Sigmoid colon (tissue), 7 donors: ENCODE measurements at regions of chr2 and their contacts with region 1.

Region 1: GRCh38 chr2:208040199-208041171 is 15.2 kb upstream of the PLEKHM3 start:
- DNase-seq: peak; percentile 83
- H3K4me3 ChIP-seq: peak overlapping the region in 3 of 4 donors; percentile 1 to 18 (median 7)
- H3K27ac ChIP-seq: peak overlapping the region in 3 of 4 donors; percentile 67 to 77 (median 77)
- H3K4me1 ChIP-seq: peaks cover 0 to 14% (median 0%) of the 10 kb centered on the region in 4 donors
- H3K27me3 ChIP-seq: no peaks in the 10 kb centered on the region
- CTCF ChIP-seq: peak; percentile 56 to 75 (median 68)
- EP300 ChIP-seq: no peak
- POLR2A ChIP-seq: no peak

Region 2: GRCh38 chr2:207395535-207396251 is 644.8 kb before region 1 on chr2:
- intact Hi-C with region 1: no loop called
- DNase-seq: no peak
- H3K4me3 ChIP-seq: no peak overlapping the region
- H3K27ac ChIP-seq: no peak overlapping the region
- H3K4me1 ChIP-seq: no peaks in the 10 kb centered on the region
- H3K27me3 ChIP-seq: no peaks in the 10 kb centered on the region
- CTCF ChIP-seq: no peak
- EP300 ChIP-seq: no peak
- POLR2A ChIP-seq: no peak

Region 3: DNA sequence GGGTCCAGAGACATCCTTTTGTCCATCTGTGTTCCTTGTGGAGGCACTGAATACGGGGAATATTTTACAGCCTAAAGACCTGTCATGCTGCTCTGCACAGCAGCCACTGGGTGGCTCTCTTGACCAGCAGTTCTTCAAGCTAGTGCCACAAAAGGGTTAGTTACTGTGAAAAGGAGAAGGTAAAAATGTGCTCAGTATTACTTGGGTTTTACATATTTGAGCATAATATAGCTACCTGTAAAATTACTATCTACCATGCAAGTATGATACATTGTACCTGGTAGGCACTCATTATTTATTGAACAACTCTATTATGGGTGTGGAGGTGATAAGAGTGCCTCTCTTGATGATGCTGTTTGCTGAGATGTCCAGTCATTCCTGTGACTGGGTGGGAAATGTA is 294.4 kb before region 1 on chr2:
- intact Hi-C with region 1: loop called (anchors 1 kb)
- DNase-seq: no peak
- H3K4me3 ChIP-seq: no peak overlapping the region
- H3K27ac ChIP-seq: no peak overlapping the region
- H3K4me1 ChIP-seq: peaks cover 0 to 4% (median 0%) of the 10 kb centered on the region in 4 donors
- H3K27me3 ChIP-seq: no peaks in the 10 kb centered on the region
- CTCF ChIP-seq: peak; percentile 69 to 87 (median 80)
- EP300 ChIP-seq: no peak
- POLR2A ChIP-seq: no peak

Region 4: GRCh38 chr2:207769597-207770486 is 270.6 kb before region 1 on chr2 and contains the start of gene FZD5:
- intact Hi-C with region 1: loop called (anchors 1 kb)
- DNase-seq: peak; percentile 97
- H3K4me3 ChIP-seq: peak within 1 kb of the TSS; percentile 75 to 98 (median 86)
- H3K27ac ChIP-seq: peak within 1 kb of the TSS; percentile 81 to 97 (median 92)
- H3K4me1 ChIP-seq: peaks cover 0 to 45% (median 40%) of the 10 kb centered on the region in 4 donors
- H3K27me3 ChIP-seq: no peaks in the 10 kb centered on the region
- CTCF ChIP-seq: peak in 3 of 4 experiments; percentile 22 to 71 (median 28)
- EP300 ChIP-seq: peak in 1 of 4 donors; percentile 35
- POLR2A ChIP-seq: peak in 1 of 2 donors; percentile 70
- total RNA-seq, gene FZD5: 29.3 to 52.0 (median 37.4) TPM

Region 5: DNA sequence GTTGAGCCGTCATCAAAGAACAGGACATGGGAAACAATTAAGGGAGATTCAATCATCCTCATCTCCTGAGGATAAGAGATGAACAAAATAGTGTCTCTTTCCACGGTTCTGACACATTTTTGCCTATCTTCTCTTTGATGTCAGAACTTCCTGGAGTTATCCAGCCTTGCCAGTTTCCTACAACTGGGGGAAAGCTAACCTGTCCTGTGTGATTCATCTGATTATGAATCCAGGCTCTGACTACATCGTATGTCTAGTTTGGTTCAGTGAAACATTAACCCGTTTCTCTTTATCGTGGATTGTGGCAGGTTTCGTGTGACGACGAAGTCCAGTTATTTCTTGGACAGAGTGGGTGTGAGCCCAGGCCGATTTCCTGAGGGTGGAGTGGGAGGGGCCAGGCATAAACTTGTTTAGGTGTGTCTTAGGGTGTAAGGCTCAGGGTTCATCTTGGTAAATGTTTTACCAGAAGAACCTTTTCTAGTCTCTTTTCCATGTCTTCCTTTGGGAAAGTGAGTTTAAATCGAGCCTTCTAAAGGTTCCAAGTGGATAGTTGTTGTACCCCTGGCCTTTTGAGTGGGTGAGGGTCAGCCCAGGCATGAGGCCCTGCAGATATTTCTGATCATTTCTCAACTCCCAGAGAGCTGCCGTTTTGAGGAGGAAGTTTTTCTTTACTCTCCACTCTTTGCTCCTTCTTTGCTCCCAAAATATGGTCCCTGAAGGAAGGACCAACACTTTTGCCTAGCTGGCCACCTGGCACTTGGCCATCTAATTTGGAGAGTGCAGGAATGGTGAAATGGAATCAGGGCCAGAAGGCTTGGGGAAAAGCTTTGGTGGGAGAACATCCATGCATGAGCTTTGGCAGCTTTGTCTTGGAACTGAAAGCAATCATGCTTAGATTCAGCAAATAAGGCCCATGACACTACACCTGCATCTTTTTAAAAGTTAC is 220.4 kb before region 1 on chr2:
- intact Hi-C with region 1: loop called (anchors 5 kb)
- DNase-seq: no peak
- H3K4me3 ChIP-seq: no peak overlapping the region
- H3K27ac ChIP-seq: peak overlapping the region in 1 of 4 donors; percentile 25
- H3K4me1 ChIP-seq: peaks cover 0 to 24% (median 19%) of the 10 kb centered on the region in 4 donors
- H3K27me3 ChIP-seq: no peaks in the 10 kb centered on the region
- CTCF ChIP-seq: no peak
- EP300 ChIP-seq: no peak
- POLR2A ChIP-seq: peak in 1 of 2 donors; percentile 17